ENCODE measurements at regions of chr16 and their contacts with region 1.

Region 1: GRCh38 chr16:52912565-52913173 is 140.0 kb downstream of the CHD9NB start:
- DNase-seq: peak in 4 of 5 donors; percentile 61 to 82 (median 72)
- H3K4me3 ChIP-seq: no peak overlapping the region
- H3K27ac ChIP-seq: no peak overlapping the region
- H3K4me1 ChIP-seq: no peaks in the 10 kb centered on the region
- H3K27me3 ChIP-seq: no peaks in the 10 kb centered on the region
- CTCF ChIP-seq: peak; percentile 73

Region 2: DNA sequence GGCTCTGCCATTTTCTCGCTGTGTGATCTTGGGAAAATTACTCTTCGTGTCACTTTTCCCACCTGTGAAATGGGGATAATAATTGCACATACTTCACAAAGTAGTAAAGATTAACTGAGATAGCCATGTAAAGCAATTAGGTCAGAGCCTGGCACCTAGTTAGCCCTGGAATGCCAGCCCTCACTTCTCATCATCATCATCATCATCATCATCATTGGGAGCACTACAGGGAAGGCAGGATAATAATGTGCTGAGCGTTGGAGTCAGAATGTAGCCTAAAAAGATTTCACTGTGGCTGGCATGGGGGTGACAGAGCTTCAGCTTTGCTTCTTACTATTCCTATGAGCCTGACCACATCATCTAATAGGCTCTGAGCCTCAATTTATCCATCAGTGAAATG is 728.3 kb before region 1 on chr16:
- intact Hi-C with region 1: loop called (anchors 10 kb)
- DNase-seq: no peak
- H3K4me3 ChIP-seq: no peak overlapping the region
- H3K27ac ChIP-seq: no peak overlapping the region
- H3K4me1 ChIP-seq: no peaks in the 10 kb centered on the region
- H3K27me3 ChIP-seq: no peaks in the 10 kb centered on the region
- CTCF ChIP-seq: no peak

Region 3: DNA sequence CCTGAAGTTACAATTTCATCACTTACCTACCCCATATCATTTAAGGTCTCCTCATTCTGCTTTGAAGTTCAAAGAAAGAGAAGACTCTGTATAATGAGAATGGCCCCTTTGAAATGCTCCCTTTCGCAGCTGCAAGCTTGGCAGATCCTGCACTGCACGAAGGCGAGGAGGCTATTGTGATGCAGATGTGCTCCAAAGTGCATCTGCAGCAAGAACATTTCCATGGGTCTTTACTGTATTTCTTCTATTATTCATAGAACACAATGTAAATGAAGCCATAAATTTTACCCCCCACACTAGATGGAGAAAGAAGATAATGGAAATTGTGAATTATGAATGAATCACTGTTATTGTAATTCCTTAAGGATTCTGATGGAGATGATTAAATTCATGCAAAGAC is 38.6 kb before region 1 on chr16:
- intact Hi-C with region 1: no loop called
- DNase-seq: no peak
- H3K4me3 ChIP-seq: no peak overlapping the region
- H3K27ac ChIP-seq: no peak overlapping the region
- H3K4me1 ChIP-seq: no peaks in the 10 kb centered on the region
- H3K27me3 ChIP-seq: no peaks in the 10 kb centered on the region
- CTCF ChIP-seq: no peak

Region 4: GRCh38 chr16:53041320-53042051 is 128.8 kb after region 1 on chr16:
- intact Hi-C with region 1: no loop called
- DNase-seq: peak in 4 of 5 donors; percentile 55 to 84 (median 72)
- H3K4me3 ChIP-seq: peak overlapping the region in 2 of 3 donors; percentile 35 to 59
- H3K27ac ChIP-seq: peak overlapping the region; percentile 80 to 84
- H3K4me1 ChIP-seq: peaks cover 3 to 33% (median 20%) of the 10 kb centered on the region in 3 donors
- H3K27me3 ChIP-seq: no peaks in the 10 kb centered on the region
- CTCF ChIP-seq: no peak